ENCODE measurements at regions of chr1 and their contacts with region 1.

Region 1: GRCh38 chr1:59892841-59893811 is 33.4 kb downstream of the CYP2J2 start:
- H3K4me3 ChIP-seq: no peak overlapping the region
- H3K27ac ChIP-seq: no peak overlapping the region
- H3K4me1 ChIP-seq: no peaks in the 10 kb centered on the region
- CTCF ChIP-seq: no peak

Region 2: DNA sequence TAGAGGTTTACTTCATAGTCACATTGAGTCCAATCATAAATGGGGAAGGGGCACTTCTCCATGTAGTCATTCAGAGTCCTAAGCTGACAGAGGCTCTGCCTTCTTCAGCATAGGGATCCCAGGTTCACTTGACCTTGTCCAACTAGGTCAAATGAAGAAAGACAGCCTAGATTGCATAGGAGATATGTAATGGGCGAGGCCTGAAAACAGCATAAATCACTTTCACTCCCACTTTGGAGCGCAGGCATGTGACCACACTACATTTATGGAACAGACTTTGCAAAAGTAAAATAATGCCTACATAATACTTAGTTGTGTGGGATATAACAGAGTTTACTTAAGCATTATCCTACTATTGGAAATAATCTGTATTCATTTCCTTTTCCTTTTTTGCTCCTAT is 26.7 kb before region 1 on chr1:
- CTCF ChIA-PET with region 1: no interaction called
- POLR2A ChIA-PET with region 1: no interaction called
- H3K4me3 ChIP-seq: no peak overlapping the region
- H3K27ac ChIP-seq: no peak overlapping the region
- H3K4me1 ChIP-seq: no peaks in the 10 kb centered on the region
- CTCF ChIP-seq: no peak

Region 3: DNA sequence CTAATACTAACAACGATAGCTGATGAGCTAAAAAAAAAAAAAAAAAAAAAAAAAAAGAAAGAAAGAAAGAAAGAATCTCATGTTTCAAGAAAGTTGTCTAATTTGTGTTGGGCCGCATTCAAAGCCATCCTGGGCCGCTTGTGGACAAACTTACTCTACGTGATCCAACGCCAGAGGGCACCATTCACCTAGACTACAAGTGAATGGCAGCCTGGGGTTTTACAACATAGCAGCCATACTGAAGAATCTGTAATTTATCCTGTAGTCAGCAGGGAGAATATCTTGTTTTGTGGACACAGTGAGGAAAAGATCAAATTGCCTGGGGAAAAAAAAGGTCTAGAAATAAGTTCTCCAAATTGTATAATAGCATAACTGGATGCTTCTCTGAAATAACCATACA is 13.6 kb before region 1 on chr1:
- CTCF ChIA-PET with region 1: interaction called, 15 read pairs
- POLR2A ChIA-PET with region 1: no interaction called
- H3K4me3 ChIP-seq: no peak overlapping the region
- H3K27ac ChIP-seq: no peak overlapping the region
- H3K4me1 ChIP-seq: no peaks in the 10 kb centered on the region
- CTCF ChIP-seq: no peak

Region 4: GRCh38 chr1:59903141-59903754 is 10.1 kb after region 1 on chr1:
- CTCF ChIA-PET with region 1: interaction called, 13 read pairs
- POLR2A ChIA-PET with region 1: no interaction called
- H3K4me3 ChIP-seq: no peak overlapping the region
- H3K27ac ChIP-seq: no peak overlapping the region
- H3K4me1 ChIP-seq: no peaks in the 10 kb centered on the region
- CTCF ChIP-seq: peak; percentile 41; the same call in 1 of the 2 replicates